CD8-positive, alpha-beta T cell (primary cell): ENCODE measurements at regions of chr3 and their contacts with region 1.

Region 1: GRCh38 chr3:197989651-197990050 is 29.6 kb downstream of the LMLN start:
- DNase-seq: no peak
- ATAC-seq: no peak
- H3K4me3 ChIP-seq: no peak overlapping the region
- H3K4me3 Mint-ChIP-seq: no peak overlapping the region
- H3K27ac ChIP-seq: no peak overlapping the region
- H3K27ac Mint-ChIP-seq: no peak overlapping the region
- H3K4me1 ChIP-seq: no peaks in the 10 kb centered on the region
- H3K4me1 Mint-ChIP-seq: no peaks in the 10 kb centered on the region
- H3K27me3 ChIP-seq: no peaks in the 10 kb centered on the region
- H3K27me3 Mint-ChIP-seq: no peaks in the 10 kb centered on the region
- CTCF ChIP-seq: no peak

Region 2: DNA sequence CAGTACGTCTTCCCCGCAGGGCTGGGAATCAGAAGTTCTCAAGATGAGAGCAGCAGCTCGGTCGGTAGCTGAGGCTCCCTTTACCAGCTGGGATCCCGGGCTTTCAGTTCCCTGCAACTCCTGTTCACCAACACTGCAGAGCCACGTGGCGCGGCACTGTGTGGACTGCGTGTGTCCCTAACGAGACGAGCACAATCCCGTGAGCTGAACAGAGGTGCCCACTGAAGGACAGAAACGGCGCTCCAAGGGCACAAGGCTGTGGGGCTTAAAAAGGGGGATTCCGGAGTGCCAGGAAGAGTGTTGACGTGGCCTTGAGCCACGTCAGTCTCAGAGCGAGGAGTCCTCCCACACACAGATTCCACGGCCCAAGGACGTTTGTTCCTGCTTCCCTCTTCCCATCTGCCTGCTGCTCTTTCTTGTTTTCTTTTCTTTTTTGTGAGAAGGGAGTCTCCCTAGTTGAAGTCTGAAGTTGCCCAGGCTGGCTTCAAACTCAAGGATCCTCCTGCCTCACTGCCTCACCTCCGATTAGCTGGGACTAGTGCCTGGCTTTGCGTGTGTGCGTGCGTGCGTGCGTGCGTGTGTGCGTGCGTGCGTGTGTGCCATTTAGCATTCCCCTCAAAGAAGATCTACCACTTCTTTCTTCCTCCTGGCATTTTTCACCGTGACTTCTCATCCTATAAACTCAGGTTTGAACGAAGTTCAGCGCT is 76.7 kb before region 1 on chr3:
- CTCF ChIA-PET with region 1: no interaction called
- POLR2A ChIA-PET with region 1: interaction called, 4 read pairs
- intact Hi-C with region 1: loop called in 1 of 2 experiments (anchors 10 kb)
- DNase-seq: peak in 2 of 9 experiments; percentile 46 to 65
- ATAC-seq: no peak
- H3K4me3 ChIP-seq: peak overlapping the region in 1 of 2 experiments; percentile 26
- H3K4me3 Mint-ChIP-seq: no peak overlapping the region
- H3K27ac ChIP-seq: no peak overlapping the region
- H3K27ac Mint-ChIP-seq: no peak overlapping the region
- H3K4me1 ChIP-seq: no peaks in the 10 kb centered on the region
- H3K4me1 Mint-ChIP-seq: no peaks in the 10 kb centered on the region
- H3K27me3 ChIP-seq: no peaks in the 10 kb centered on the region
- H3K27me3 Mint-ChIP-seq: no peaks in the 10 kb centered on the region
- CTCF ChIP-seq: no peak